ENCODE measurements at regions of chr1 and their contacts with region 1.

Region 1: GRCh38 chr1:23484253-23485001 is 448 bp upstream of the ASAP3 start:
- DNase-seq: peak; percentile 96 to 99
- ATAC-seq: peak; percentile 96
- H3K4me3 ChIP-seq: peak overlapping the region; percentile 80 to 90
- H3K27ac ChIP-seq: peak overlapping the region; percentile 52 to 82
- H3K4me1 ChIP-seq: no peaks in the 10 kb centered on the region
- H3K27me3 ChIP-seq: no peaks in the 10 kb centered on the region

Region 2: GRCh38 chr1:23422241-23423030 is 62.0 kb before region 1 on chr1:
- intact Hi-C with region 1: loop called (anchors 5 kb)
- DNase-seq: peak; percentile 91 to 92
- ATAC-seq: peak; percentile 70
- H3K4me3 ChIP-seq: no peak overlapping the region
- H3K27ac ChIP-seq: peak overlapping the region; percentile 2 to 87
- H3K4me1 ChIP-seq: no peaks in the 10 kb centered on the region
- H3K27me3 ChIP-seq: no peaks in the 10 kb centered on the region